CD8-positive, alpha-beta T cell (primary cell): ENCODE measurements at regions of chr1 and their contacts with region 1.

Region 1: DNA sequence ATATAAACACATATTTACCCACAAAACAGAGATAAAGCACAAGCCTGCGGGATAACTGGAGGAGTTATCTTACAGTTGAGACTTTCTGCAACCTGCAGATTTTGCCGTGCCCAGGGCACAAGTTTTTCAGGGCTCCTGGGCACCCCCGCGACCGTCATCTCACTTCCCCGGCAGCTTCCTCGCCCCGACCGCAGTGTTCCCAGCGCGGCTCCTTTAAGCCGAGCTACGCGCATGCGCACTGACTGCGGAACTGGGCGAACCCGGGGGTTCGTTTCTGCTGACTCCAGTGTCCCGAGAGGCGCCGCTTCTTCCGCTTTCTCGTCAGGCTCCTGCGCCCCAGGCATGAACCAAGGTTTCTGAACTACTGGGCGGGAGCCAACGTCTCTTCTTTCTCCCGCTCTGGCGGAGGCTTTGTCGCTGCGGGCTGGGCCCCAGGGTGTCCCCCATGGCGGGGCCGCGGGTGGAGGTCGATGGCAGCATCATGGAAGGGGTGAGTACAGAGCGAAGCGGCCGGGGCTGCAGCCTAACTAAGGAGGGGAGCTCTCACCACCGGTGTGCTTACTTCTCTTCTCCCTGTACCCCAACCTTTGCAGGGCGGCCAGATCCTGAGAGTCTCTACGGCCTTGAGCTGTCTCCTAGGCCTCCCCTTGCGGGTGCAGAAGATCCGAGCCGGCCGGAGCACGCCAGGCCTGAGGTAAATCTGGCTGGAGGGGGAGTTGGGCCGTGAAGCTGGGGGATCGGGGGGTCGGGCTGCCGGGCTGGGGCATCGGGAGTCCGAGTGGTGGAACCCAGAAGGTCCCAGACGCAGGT is at the start of gene RTCA:
- DNase-seq: peak; percentile 85 to 98 (median 97)
- ATAC-seq: peak; percentile 94
- H3K4me3 ChIP-seq: peak within 1 kb of the TSS; percentile 80 to 94
- H3K4me3 Mint-ChIP-seq: peak within 1 kb of the TSS; percentile 100
- H3K27ac ChIP-seq: peak within 1 kb of the TSS; percentile 68 to 78
- H3K27ac Mint-ChIP-seq: peak within 1 kb of the TSS; percentile 98
- H3K4me1 ChIP-seq: peaks cover 29% of the 10 kb centered on the region
- H3K4me1 Mint-ChIP-seq: peaks cover 47% of the 10 kb centered on the region
- H3K27me3 ChIP-seq: no peaks in the 10 kb centered on the region
- H3K27me3 Mint-ChIP-seq: no peaks in the 10 kb centered on the region
- CTCF ChIP-seq: no peak
- total RNA-seq, gene RTCA: 36.2 to 37.7 TPM

Region 2: DNA sequence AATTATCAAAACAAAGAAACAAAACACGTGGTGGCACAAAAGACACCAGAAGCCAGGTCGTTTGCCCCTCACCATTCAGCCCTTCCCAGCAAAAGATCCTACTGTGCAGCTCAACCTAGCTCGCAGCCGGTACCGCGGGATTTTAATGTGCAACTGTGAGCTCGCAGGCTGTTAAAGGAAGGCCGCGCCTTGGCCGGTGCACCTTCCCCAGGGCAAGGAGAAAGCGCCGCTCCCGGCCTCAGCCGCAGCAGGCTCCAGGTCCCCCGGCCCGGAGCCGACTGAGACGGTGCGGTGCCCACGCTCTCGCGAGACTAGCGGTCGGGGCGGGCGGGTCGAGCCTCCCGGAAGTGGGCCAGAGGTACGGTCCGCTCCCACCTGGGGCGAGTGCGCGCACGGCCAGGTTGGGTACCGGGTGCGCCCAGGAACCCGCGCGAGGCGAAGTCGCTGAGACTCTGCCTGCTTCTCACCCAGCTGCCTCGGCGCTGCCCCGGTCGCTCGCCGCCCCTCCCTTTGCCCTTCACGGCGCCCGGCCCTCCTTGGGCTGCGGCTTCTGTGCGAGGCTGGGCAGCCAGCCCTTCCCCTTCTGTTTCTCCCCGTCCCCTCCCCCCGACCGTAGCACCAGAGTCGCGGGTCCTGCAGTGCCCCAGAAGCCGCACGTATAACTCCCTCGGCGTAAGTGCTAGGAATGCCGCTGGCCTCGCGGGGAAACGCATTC is 416.2 kb before region 1 on chr1 and contains the start of gene AGL:
- CTCF ChIA-PET with region 1: no interaction called
- POLR2A ChIA-PET with region 1: no interaction called
- intact Hi-C with region 1: loop called in 1 of 2 experiments (anchors 10 kb)
- DNase-seq: peak; percentile 75 to 92 (median 86)
- ATAC-seq: peak; percentile 95
- H3K4me3 ChIP-seq: peak within 1 kb of the TSS; percentile 80 to 96
- H3K4me3 Mint-ChIP-seq: peak within 1 kb of the TSS; percentile 95
- H3K27ac ChIP-seq: peak within 1 kb of the TSS; percentile 70 to 74
- H3K27ac Mint-ChIP-seq: peak within 1 kb of the TSS; percentile 94
- H3K4me1 ChIP-seq: peaks cover 14% of the 10 kb centered on the region
- H3K4me1 Mint-ChIP-seq: peaks cover 42% of the 10 kb centered on the region
- H3K27me3 ChIP-seq: no peaks in the 10 kb centered on the region
- H3K27me3 Mint-ChIP-seq: no peaks in the 10 kb centered on the region
- CTCF ChIP-seq: no peak
- total RNA-seq, gene AGL: 7.6 to 8.4 TPM

Region 3: GRCh38 chr1:100229681-100230443 is 36.3 kb before region 1 on chr1:
- CTCF ChIA-PET with region 1: no interaction called
- POLR2A ChIA-PET with region 1: no interaction called
- intact Hi-C with region 1: loop called in 1 of 2 experiments (anchors 5 kb)
- DNase-seq: no peak
- ATAC-seq: no peak
- H3K4me3 ChIP-seq: no peak overlapping the region
- H3K4me3 Mint-ChIP-seq: no peak overlapping the region
- H3K27ac ChIP-seq: no peak overlapping the region
- H3K27ac Mint-ChIP-seq: no peak overlapping the region
- H3K4me1 ChIP-seq: no peaks in the 10 kb centered on the region
- H3K4me1 Mint-ChIP-seq: peaks cover 2% of the 10 kb centered on the region
- H3K27me3 ChIP-seq: no peaks in the 10 kb centered on the region
- H3K27me3 Mint-ChIP-seq: no peaks in the 10 kb centered on the region
- CTCF ChIP-seq: no peak

Region 4: DNA sequence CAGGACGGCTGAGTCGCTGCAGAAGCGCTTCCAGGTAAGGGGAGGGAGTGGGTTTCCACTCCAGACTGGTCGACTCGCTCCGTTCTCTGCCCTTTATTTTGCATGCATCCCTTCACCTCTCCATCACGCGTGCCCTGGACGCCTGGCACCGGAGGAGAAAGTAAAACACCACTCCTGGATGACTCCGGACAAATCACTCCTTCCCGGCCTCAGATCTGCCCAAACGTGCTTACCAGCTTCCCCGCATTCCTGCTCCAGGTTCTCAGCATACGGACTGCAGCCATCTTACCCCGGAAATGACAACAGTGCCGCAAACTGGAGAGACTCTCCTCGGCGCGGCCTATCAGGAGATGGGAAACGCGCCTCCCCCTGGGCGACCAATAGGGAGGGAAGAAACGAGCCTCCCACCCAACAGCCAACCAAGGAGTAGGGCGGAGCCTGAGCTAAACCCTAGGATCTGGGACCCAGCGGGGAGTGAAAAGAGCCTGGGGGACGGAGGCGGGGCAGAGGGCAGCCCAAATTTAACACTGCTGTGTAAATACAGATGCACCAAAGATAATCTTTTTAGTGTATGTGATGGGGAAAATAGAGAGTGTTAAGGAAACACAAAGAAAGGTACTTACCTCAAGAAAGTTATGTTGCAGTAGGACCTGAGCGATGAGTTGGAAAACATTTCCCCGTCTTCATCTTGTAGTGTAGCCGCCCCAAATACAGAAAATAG is 16.4 kb before region 1 on chr1 and contains the start of gene DBT:
- CTCF ChIA-PET with region 1: interaction called, 4 read pairs
- POLR2A ChIA-PET with region 1: interaction called, 14 read pairs
- intact Hi-C with region 1: loop called (anchors 1 kb)
- DNase-seq: peak; percentile 77 to 96 (median 92)
- ATAC-seq: peak; percentile 100
- H3K4me3 ChIP-seq: peak within 1 kb of the TSS; percentile 68 to 92
- H3K4me3 Mint-ChIP-seq: no peak within 1 kb of the TSS
- H3K27ac ChIP-seq: peak within 1 kb of the TSS; percentile 71 to 87
- H3K27ac Mint-ChIP-seq: no peak within 1 kb of the TSS
- H3K4me1 ChIP-seq: peaks cover 20% of the 10 kb centered on the region
- H3K4me1 Mint-ChIP-seq: peaks cover 18% of the 10 kb centered on the region
- H3K27me3 ChIP-seq: no peaks in the 10 kb centered on the region
- H3K27me3 Mint-ChIP-seq: no peaks in the 10 kb centered on the region
- CTCF ChIP-seq: no peak
- total RNA-seq, gene DBT: 4.6 to 4.9 TPM

Region 5: DNA sequence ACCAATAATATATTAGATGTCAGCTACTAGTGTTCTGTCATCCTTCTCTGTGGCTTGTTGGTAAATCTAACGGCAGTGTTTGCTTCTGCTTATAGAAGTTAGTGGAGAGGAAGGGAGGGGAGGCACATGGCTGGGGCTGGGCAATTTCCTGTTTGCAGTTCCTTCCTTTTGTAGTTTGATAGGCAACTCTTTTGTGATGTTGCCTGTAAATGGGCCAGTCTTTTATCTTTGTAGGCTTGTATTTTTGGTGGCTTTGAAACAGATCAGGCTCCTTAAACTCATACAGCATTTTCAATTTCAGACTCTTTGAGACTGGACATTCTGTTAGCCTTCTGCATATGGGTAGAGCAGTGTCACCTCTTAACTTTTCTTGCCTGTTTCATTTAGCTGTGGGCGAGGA is 134.3 kb after region 1 on chr1:
- CTCF ChIA-PET with region 1: interaction called, 3 read pairs
- POLR2A ChIA-PET with region 1: interaction called, 3 read pairs
- intact Hi-C with region 1: loop called in 1 of 2 experiments (anchors 5 kb)
- DNase-seq: peak; percentile 39 to 90 (median 66)
- ATAC-seq: peak; percentile 82
- H3K4me3 ChIP-seq: peak overlapping the region; percentile 13 to 19
- H3K4me3 Mint-ChIP-seq: peak overlapping the region; percentile 73
- H3K27ac ChIP-seq: peak overlapping the region; percentile 59 to 80
- H3K27ac Mint-ChIP-seq: peak overlapping the region; percentile 92
- H3K4me1 ChIP-seq: peaks cover 93% of the 10 kb centered on the region
- H3K4me1 Mint-ChIP-seq: peaks cover 86% of the 10 kb centered on the region
- H3K27me3 ChIP-seq: no peaks in the 10 kb centered on the region
- H3K27me3 Mint-ChIP-seq: no peaks in the 10 kb centered on the region
- CTCF ChIP-seq: no peak

Region 6: DNA sequence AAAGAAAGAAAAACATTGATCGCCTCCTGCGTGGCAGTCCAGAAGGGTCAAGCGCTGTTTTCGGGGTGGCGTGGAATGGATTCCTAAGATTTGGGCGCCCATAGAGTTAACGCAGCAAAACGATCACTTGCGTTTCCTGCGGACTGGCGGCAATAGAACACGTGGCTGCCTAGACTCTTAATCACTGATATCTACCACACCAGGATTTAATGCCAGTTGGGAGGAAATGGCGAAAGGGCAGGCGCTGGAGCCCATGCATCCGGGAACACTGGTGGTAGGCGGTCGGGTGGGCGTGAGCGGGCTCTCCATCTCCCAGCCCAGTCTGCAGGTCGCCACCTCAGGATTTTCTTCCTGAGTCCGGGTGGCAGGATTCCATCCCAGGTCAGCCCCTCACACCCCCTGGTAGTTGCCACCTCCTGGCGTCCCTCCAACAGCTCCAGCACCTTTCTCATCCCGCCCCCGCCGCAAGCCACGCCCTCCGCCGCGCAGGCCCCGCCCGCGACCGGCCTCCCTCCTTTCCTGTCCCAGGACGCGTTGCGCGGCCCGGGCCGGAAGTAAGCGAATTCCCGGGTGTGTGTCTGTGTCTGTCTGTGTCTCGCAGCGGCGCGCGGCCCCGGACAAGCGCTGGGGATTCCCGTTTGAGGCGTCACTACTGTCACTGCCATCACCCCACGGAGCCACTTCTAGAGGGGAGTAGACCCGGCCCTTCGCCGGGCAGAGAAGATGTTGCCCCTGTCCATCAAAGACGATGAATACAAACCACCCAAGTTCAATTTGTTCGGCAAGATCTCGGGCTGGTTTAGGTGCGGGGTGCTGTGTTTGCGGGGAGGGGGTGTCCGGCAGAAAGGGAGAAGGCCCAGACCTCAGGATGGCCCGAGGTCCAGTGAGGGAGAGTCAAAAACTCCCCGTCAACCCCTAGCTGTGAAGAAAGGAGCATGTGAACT is 629.7 kb after region 1 on chr1 and contains the start of gene SLC30A7:
- CTCF ChIA-PET with region 1: no interaction called
- POLR2A ChIA-PET with region 1: no interaction called
- intact Hi-C with region 1: loop called (anchors 10 kb)
- DNase-seq: peak; percentile 91 to 98 (median 96)
- ATAC-seq: peak; percentile 72
- H3K4me3 ChIP-seq: peak within 1 kb of the TSS; percentile 92 to 98
- H3K4me3 Mint-ChIP-seq: peak within 1 kb of the TSS; percentile 100
- H3K27ac ChIP-seq: peak within 1 kb of the TSS; percentile 85 to 99
- H3K27ac Mint-ChIP-seq: peak within 1 kb of the TSS; percentile 100
- H3K4me1 ChIP-seq: peaks cover 20% of the 10 kb centered on the region
- H3K4me1 Mint-ChIP-seq: peaks cover 49% of the 10 kb centered on the region
- H3K27me3 ChIP-seq: no peaks in the 10 kb centered on the region
- H3K27me3 Mint-ChIP-seq: no peaks in the 10 kb centered on the region
- CTCF ChIP-seq: no peak
- total RNA-seq, gene SLC30A7: 18.8 to 20.2 TPM